Right cardiac atrium (tissue), 5 donors: ENCODE measurements at regions of chr2 and their contacts with region 1.

Region 1: GRCh38 chr2:62705007-62705829 is at the start of gene EHBP1:
- DNase-seq: peak; percentile 99 to 100 (median 99)
- ATAC-seq: peak; percentile 99 to 100
- H3K4me3 ChIP-seq: peak within 1 kb of the TSS; percentile 95
- H3K27ac ChIP-seq: peak within 1 kb of the TSS; percentile 92
- H3K4me1 ChIP-seq: peaks cover 4% of the 10 kb centered on the region
- H3K27me3 ChIP-seq: no peaks in the 10 kb centered on the region
- total RNA-seq, gene EHBP1: 32.5 to 37.5 (median 33.3) TPM

Region 2: GRCh38 chr2:62505750-62506420 is 199.3 kb before region 1 on chr2 and contains the start of gene TMEM17:
- intact Hi-C with region 1: loop called in 1 of 4 experiments (anchors 10 kb)
- DNase-seq: peak; percentile 96 to 97 (median 97)
- ATAC-seq: peak; percentile 98 to 99
- H3K4me3 ChIP-seq: peak within 1 kb of the TSS; percentile 84
- H3K27ac ChIP-seq: peak within 1 kb of the TSS; percentile 86
- H3K4me1 ChIP-seq: no peaks in the 10 kb centered on the region
- H3K27me3 ChIP-seq: no peaks in the 10 kb centered on the region
- total RNA-seq, gene TMEM17: 1.5 to 2.9 (median 1.7) TPM

Region 3: GRCh38 chr2:62774555-62775366 is 69.5 kb after region 1 on chr2:
- intact Hi-C with region 1: loop called in 1 of 4 experiments (anchors 5 kb)
- DNase-seq: peak in 1 of 3 donors; percentile 21
- ATAC-seq: peak; percentile 62 to 71
- H3K4me3 ChIP-seq: no peak overlapping the region
- H3K27ac ChIP-seq: no peak overlapping the region
- H3K4me1 ChIP-seq: no peaks in the 10 kb centered on the region
- H3K27me3 ChIP-seq: no peaks in the 10 kb centered on the region

Region 4: DNA sequence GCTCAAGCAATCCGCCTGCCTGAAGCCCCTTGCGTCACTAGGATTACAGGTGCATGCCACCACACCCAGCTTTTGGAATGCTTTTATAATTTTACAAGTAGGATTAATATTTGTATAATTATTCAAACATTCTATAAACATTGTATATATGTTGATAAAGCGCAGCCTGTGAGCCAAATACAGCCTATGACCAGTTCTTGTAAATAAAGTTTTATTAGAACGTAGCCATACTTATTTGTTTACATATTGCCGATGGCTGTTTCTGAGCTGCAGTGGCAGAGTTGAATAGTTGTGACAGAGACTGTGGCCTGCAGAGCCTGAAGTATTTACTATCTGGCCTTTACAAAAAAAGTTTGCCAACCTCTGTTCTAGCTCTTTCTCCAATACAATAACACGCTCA is 578.1 kb after region 1 on chr2:
- intact Hi-C with region 1: no loop called
- DNase-seq: no peak
- ATAC-seq: no peak
- H3K4me3 ChIP-seq: no peak overlapping the region
- H3K27ac ChIP-seq: no peak overlapping the region
- H3K4me1 ChIP-seq: no peaks in the 10 kb centered on the region
- H3K27me3 ChIP-seq: no peaks in the 10 kb centered on the region